CD8-positive, alpha-beta memory T cell (primary cell): ENCODE measurements at regions of chr7 and their contacts with region 1.

Region 1: DNA sequence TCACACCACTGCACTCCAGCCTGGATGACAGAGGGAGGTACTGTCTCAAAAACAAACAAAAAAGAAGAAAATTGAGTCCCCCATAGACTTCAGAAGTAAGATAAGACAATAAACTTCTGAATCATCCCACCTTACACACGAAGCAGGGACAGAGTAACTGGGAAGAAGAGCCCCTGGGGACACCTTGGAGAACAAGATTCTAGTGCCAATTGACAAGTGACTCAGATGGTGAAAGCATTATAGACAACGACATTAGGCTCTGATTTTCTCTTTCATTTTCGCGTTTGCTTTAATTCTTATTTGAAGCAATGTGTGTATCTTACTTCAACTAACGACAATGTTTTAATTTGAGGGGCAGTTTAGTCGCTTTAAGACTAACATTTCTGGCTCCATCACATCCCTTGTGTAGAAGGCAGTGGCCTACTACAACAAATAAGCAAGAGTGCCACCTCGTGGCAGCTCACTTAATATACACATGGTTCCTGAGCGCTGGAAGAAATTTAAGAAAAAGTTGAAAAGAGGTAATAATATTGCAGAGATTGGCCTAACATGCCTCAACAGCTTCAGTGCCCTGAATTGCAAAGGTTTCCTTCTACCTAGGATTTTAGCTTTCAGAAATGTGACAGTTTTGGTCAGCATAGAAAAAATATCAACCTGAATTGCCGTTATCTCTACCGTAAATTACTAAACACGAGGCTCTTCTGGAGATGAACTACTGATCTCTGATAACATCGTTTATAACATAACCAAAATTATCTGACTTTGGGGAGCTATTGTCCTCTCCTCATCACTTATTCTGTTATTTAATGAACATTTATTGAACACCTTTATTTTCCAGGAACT is 36.7 kb downstream of the ASNS start:
- DNase-seq: peak; percentile 21 to 65 (median 35)
- H3K4me3 ChIP-seq: no peak overlapping the region
- H3K4me3 Mint-ChIP-seq: no peak overlapping the region
- H3K27ac ChIP-seq: no peak overlapping the region
- H3K27ac Mint-ChIP-seq: no peak overlapping the region
- H3K4me1 ChIP-seq: no peaks in the 10 kb centered on the region
- H3K4me1 Mint-ChIP-seq: no peaks in the 10 kb centered on the region
- H3K27me3 ChIP-seq: no peaks in the 10 kb centered on the region
- H3K27me3 Mint-ChIP-seq: peaks cover 1 to 63% of the 10 kb centered on the region in 2 donors

Region 2: DNA sequence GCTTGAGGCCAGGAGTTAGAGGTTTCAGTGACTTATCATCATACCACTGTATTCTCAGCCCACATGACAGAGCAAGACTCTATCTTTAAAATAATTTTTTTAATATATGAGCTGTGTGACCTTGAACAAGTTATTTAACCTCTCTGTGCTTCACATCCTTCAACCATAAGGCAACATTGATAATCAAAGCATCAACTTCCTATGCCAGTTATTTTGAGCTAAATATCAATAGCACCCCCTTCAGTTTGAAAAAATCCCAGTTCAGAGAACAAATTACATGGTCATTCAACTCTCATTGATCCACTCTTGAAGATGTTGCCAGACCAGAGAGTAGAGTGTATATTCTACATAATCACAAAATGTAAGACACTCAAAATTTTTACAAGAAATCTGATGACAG is 16.4 kb before region 1 on chr7:
- CTCF ChIA-PET with region 1: interaction called, 27 read pairs
- POLR2A ChIA-PET with region 1: no interaction called
- DNase-seq: no peak
- H3K4me3 ChIP-seq: no peak overlapping the region
- H3K4me3 Mint-ChIP-seq: no peak overlapping the region
- H3K27ac ChIP-seq: no peak overlapping the region
- H3K27ac Mint-ChIP-seq: no peak overlapping the region
- H3K4me1 ChIP-seq: no peaks in the 10 kb centered on the region
- H3K4me1 Mint-ChIP-seq: no peaks in the 10 kb centered on the region
- H3K27me3 ChIP-seq: no peaks in the 10 kb centered on the region
- H3K27me3 Mint-ChIP-seq: peaks cover 6% of the 10 kb centered on the region in 2 donors